ENCODE measurements at regions of chr17 and their contacts with region 1.

Region 1: GRCh38 chr17:39852239-39852638 is 11.9 kb downstream of the IKZF3 start:
- DNase-seq: no peak
- H3K4me3 ChIP-seq: no peak overlapping the region
- H3K27ac ChIP-seq: no peak overlapping the region
- H3K4me1 ChIP-seq: no peaks in the 10 kb centered on the region
- H3K27me3 ChIP-seq: no peaks in the 10 kb centered on the region
- CTCF ChIP-seq: no peak

Region 2: GRCh38 chr17:39118674-39119419 is 733.4 kb before region 1 on chr17:
- CTCF ChIA-PET with region 1: no interaction called
- POLR2A ChIA-PET with region 1: no interaction called
- intact Hi-C with region 1: no loop called
- DNase-seq: no peak
- H3K4me3 ChIP-seq: no peak overlapping the region
- H3K27ac ChIP-seq: no peak overlapping the region
- H3K4me1 ChIP-seq: no peaks in the 10 kb centered on the region
- H3K27me3 ChIP-seq: no peaks in the 10 kb centered on the region
- CTCF ChIP-seq: no peak

Region 3: DNA sequence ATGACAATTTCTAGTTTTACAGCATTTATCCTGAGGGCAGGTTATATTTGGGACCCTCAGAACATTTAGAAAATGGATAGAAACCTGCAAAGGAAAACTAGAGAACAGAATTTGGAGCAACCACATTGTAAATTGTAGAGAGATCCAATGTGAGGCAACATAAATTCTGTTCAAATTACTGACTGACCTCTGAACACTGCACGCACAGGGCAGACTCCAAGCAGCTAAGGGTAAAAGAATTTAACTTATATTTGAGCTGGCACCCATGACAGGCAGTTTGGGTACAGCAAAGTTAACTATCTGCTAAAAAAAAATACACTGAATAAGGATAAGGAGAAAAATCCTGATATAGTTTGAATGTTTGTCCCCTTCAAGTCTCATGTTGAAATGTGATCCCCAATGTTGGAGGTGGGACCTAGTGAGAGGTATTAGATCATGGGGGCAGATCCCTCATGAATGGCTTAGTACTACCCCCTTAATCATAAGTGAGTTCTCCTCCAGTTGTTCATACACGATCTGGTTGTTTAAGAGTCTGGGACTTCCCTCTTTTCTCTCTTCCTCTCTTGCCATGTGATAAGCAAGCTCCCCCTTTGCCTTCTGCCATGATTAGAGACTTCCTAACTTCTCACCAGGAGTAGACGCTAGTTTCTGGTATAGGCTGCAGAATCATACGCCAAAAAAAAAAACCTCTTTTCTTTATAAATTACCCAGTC is 526.6 kb before region 1 on chr17:
- CTCF ChIA-PET with region 1: no interaction called
- POLR2A ChIA-PET with region 1: interaction called, 13 read pairs
- intact Hi-C with region 1: no loop called
- DNase-seq: no peak
- H3K4me3 ChIP-seq: no peak overlapping the region
- H3K27ac ChIP-seq: no peak overlapping the region
- H3K4me1 ChIP-seq: no peaks in the 10 kb centered on the region
- H3K27me3 ChIP-seq: no peaks in the 10 kb centered on the region
- CTCF ChIP-seq: no peak

Measured in PC-9 (cell line).